Naive thymus-derived CD4-positive, alpha-beta T cell (primary cell): ENCODE measurements at regions of chr10 and their contacts with region 1.

Region 1: GRCh38 chr10:101367569-101368453 is 13.8 kb downstream of the BTRC start:
- DNase-seq: no peak
- ATAC-seq: no peak
- H3K4me3 ChIP-seq: no peak overlapping the region
- H3K4me3 Mint-ChIP-seq: no peak overlapping the region
- H3K27ac ChIP-seq: no peak overlapping the region
- H3K27ac Mint-ChIP-seq: no peak overlapping the region
- H3K4me1 ChIP-seq: no peaks in the 10 kb centered on the region
- H3K4me1 Mint-ChIP-seq: peaks cover 6 to 35% (median 14%) of the 10 kb centered on the region in 7 donors
- H3K27me3 ChIP-seq: no peaks in the 10 kb centered on the region
- H3K27me3 Mint-ChIP-seq: no peaks in the 10 kb centered on the region

Region 2: GRCh38 chr10:103013416-103013815 is 1645.6 kb after region 1 on chr10:
- CTCF ChIA-PET with region 1: interaction called, 12 read pairs
- POLR2A ChIA-PET with region 1: no interaction called
- intact Hi-C with region 1: no loop called
- DNase-seq: no peak
- ATAC-seq: no peak
- H3K4me3 ChIP-seq: no peak overlapping the region
- H3K4me3 Mint-ChIP-seq: no peak overlapping the region
- H3K27ac ChIP-seq: no peak overlapping the region
- H3K27ac Mint-ChIP-seq: no peak overlapping the region
- H3K4me1 ChIP-seq: no peaks in the 10 kb centered on the region
- H3K4me1 Mint-ChIP-seq: peaks cover 0 to 5% (median 0%) of the 10 kb centered on the region in 7 donors
- H3K27me3 ChIP-seq: no peaks in the 10 kb centered on the region
- H3K27me3 Mint-ChIP-seq: no peaks in the 10 kb centered on the region